Stomach (tissue), 19 donors: ENCODE measurements at regions of chr12 and their contacts with region 1.

Region 1: GRCh38 chr12:8681041-8681902 is 16.5 kb upstream of the RIMKLB start:
- DNase-seq: peak in 1 of 2 donors; percentile 75
- H3K4me3 ChIP-seq: peak overlapping the region in 2 of 4 donors; percentile 3 to 4
- H3K27ac ChIP-seq: peak overlapping the region in 3 of 5 donors; percentile 15 to 35 (median 27)
- H3K4me1 ChIP-seq: peaks cover 0 to 14% (median 6%) of the 10 kb centered on the region in 4 donors
- H3K27me3 ChIP-seq: no peaks in the 10 kb centered on the region
- CTCF ChIP-seq: no peak
- EP300 ChIP-seq: no peak
- POLR2A ChIP-seq: no peak

Region 2: DNA sequence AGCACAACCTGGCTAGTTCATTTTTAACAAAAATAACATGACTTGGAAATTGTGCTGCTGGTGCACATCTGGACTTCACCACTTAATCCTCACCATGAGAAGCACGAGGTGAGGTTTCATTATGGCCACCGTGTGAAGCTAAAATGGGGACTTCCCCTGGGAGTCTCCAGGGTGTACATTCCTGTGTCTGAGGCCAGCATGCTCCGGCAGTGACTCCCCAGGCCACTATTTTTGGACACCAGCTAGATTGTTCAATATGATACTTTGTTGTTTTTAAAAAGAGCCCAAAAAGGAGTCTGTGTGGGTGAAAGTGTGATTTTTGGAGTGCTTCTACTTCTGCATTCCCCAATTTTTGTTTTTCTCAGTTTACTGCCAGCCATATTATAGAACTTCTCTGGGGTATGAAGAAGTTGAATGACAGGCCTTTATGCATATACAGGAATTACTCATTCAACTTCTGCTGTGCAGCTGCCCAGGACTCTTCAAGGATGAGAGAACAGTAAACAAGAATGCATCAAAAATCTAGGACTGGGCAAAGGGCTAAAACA is 51.7 kb before region 1 on chr12:
- intact Hi-C with region 1: no loop called
- DNase-seq: no peak
- H3K4me3 ChIP-seq: no peak overlapping the region
- H3K27ac ChIP-seq: no peak overlapping the region
- H3K4me1 ChIP-seq: no peaks in the 10 kb centered on the region
- H3K27me3 ChIP-seq: no peaks in the 10 kb centered on the region
- CTCF ChIP-seq: no peak
- EP300 ChIP-seq: no peak
- POLR2A ChIP-seq: no peak

Region 3: DNA sequence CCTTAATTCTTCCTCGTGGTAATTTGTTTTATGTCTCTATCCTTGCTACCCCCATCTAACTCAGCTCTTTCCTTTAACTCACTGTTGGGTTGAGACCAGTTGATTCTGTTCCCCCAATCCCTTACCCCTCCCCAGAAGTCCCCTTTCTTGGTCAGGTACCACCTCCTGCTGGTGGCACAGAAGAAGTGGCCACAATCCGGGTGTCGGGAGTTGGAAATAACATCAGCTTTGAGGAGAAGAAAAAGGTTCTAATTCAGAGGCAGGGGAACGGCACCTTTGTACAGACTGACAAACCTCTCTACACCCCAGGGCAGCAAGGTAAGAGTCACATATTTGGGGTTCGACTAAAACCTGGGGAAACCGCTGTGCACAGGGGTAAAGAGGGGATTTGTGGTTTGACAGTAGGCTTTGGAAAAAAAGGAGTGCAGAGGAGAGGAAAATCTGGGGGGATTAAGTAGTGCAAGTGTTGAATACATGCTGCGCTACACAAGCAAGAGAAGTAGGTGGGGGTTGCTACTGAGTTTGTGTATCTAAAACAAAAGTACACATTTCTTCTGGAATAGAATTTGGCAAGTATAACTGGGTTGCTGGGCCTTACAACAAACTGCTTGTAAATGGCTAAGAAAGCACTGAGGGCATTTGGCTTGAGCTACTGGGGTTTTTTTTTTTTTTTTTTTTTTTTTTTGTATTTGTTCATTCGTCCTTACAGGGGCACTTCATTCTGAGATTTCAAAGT is 142.5 kb after region 1 on chr12:
- intact Hi-C with region 1: loop called (anchors 5 kb)
- DNase-seq: peak in 1 of 2 donors; percentile 53
- H3K4me3 ChIP-seq: no peak overlapping the region
- H3K27ac ChIP-seq: no peak overlapping the region
- H3K4me1 ChIP-seq: peaks cover 0 to 14% (median 0%) of the 10 kb centered on the region in 4 donors
- H3K27me3 ChIP-seq: no peaks in the 10 kb centered on the region
- CTCF ChIP-seq: peak in 5 of 7 experiments; percentile 34 to 63 (median 53)
- EP300 ChIP-seq: no peak
- POLR2A ChIP-seq: no peak

Region 4: GRCh38 chr12:8890313-8891085 is 209.2 kb after region 1 on chr12:
- intact Hi-C with region 1: loop called (anchors 10 kb)
- DNase-seq: peak; percentile 51 to 82
- H3K4me3 ChIP-seq: peak overlapping the region; percentile 40 to 53 (median 46)
- H3K27ac ChIP-seq: peak overlapping the region in 1 of 5 donors; percentile 49
- H3K4me1 ChIP-seq: peaks cover 0 to 4% (median 2%) of the 10 kb centered on the region in 4 donors
- H3K27me3 ChIP-seq: no peaks in the 10 kb centered on the region
- CTCF ChIP-seq: peak in 4 of 7 experiments; percentile 82 to 90 (median 84)
- EP300 ChIP-seq: no peak
- POLR2A ChIP-seq: no peak